Dorsolateral prefrontal cortex (tissue), 120 donors: ENCODE measurements at regions of chr12 and their contacts with region 1.

Region 1: GRCh38 chr12:50167041-50167828 is at the start of gene CERS5:
- DNase-seq: peak; percentile 89 to 98 (median 96)
- H3K4me3 ChIP-seq: peak within 1 kb of the TSS; percentile 74 to 99 (median 92)
- H3K27ac ChIP-seq: peak within 1 kb of the TSS in 58 of 59 donors; percentile 51 to 97 (median 88)
- H3K27me3 ChIP-seq: no peaks in the 10 kb centered on the region
- CTCF ChIP-seq: peak in 52 of 56 donors; percentile 10 to 77 (median 54)
- total RNA-seq, gene CERS5: 48.2 to 123 (median 77.2) TPM

Region 2: GRCh38 chr12:49945394-49946080 is 221.7 kb before region 1 on chr12:
- intact Hi-C with region 1: no loop called
- DNase-seq: peak in 9 of 10 donors; percentile 63 to 87 (median 78)
- H3K4me3 ChIP-seq: peak overlapping the region in 52 of 59 donors; percentile 5 to 61 (median 41)
- H3K27ac ChIP-seq: peak overlapping the region in 18 of 59 donors; percentile 1 to 66 (median 42)
- H3K27me3 ChIP-seq: no peaks in the 10 kb centered on the region
- CTCF ChIP-seq: peak; percentile 58 to 96 (median 86)

Region 3: GRCh38 chr12:50084775-50085614 is 82.2 kb before region 1 on chr12 and contains the start of gene SMARCD1:
- intact Hi-C with region 1: loop called (anchors 1 to 5 kb)
- DNase-seq: peak; percentile 90 to 96 (median 94)
- H3K4me3 ChIP-seq: peak within 1 kb of the TSS; percentile 66 to 96 (median 86)
- H3K27ac ChIP-seq: peak within 1 kb of the TSS; percentile 79 to 98 (median 95)
- H3K27me3 ChIP-seq: no peaks in the 10 kb centered on the region
- CTCF ChIP-seq: peak; percentile 36 to 87 (median 72)
- total RNA-seq, gene SMARCD1: 30.8 to 66.7 (median 44.2) TPM

Region 4: DNA sequence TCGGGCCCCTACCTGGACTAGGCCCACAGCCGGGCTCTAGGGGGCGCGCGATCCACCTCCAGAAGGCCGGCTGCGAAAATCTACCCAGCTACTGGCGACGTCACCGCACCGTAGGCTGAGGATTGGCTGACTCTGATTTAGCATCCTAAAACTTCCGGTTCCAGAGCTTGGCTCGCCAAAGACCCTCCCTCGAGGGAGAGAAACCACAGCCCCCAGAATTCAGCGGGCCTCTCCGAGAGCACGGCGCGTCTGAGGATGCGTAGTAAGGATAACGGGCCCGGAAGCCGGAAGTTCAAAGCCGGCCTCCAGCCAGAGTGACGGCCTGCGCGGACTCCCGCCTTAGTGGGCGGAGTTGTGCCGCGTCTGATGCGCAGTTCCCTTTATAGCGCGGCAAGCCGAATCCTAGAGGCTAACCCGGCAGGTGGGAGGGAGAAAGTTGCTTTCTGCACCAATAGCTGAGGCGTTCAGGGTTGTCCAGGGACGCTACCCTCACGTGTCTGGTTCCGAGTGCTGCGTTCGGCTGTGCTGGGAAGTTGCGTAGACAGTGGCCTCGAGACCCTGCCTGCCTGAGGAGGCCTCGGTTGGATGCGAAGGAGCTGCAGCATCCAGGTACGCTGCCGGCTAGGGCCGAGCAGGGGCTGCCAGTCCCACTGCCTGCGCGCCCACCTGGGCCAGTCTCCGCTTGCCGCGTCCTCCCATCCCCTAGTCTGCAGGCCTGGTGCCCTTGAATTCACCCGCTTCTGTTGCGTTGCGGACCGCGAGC is 55.4 kb before region 1 on chr12 and contains the start of gene COX14:
- intact Hi-C with region 1: loop called (anchors 2 kb)
- DNase-seq: peak; percentile 98 to 100 (median 99)
- H3K4me3 ChIP-seq: peak within 1 kb of the TSS; percentile 72 to 100 (median 96)
- H3K27ac ChIP-seq: peak within 1 kb of the TSS; percentile 65 to 97 (median 92)
- H3K27me3 ChIP-seq: no peaks in the 10 kb centered on the region
- CTCF ChIP-seq: peak in 55 of 56 donors; percentile 66 to 100 (median 91)
- total RNA-seq, gene COX14: 34.1 to 74.3 (median 53.9) TPM

Region 5: DNA sequence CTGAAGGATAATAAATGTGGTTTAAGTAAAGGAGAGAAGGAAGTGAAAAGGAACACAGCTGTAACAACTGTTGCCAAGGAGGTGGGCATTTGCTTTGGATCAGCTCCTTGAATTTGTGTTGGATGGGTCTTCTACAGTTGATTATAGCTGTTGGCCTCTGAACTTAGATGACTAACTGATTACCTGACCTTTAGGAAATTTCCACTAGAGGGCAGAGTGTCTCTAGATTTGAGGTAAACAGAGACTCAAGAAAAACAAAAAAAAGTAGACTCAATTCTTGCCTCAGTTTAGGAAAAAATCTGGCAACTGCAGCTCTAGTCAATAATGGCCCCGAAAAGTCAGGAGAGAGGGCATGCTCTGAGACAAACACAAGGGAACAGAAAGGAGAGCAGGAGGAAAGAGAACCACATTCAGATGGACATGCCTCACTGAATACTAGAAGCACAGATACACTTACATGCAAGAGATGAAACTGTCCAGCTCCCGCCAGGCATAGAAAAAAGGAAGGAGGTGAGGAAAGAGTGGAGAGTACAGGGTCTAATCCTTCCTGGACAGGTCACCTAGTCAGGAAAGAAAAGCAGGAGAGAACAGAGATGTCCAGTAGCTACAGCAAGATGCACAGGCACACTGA is 34.6 kb before region 1 on chr12:
- intact Hi-C with region 1: loop called in 1 of 2 experiments (anchors 5 kb)
- DNase-seq: no peak
- H3K4me3 ChIP-seq: no peak overlapping the region
- H3K27ac ChIP-seq: peak overlapping the region in 43 of 59 donors; percentile 3 to 76 (median 43)
- H3K27me3 ChIP-seq: no peaks in the 10 kb centered on the region
- CTCF ChIP-seq: peak in 53 of 56 donors; percentile 32 to 80 (median 63)

Region 6: DNA sequence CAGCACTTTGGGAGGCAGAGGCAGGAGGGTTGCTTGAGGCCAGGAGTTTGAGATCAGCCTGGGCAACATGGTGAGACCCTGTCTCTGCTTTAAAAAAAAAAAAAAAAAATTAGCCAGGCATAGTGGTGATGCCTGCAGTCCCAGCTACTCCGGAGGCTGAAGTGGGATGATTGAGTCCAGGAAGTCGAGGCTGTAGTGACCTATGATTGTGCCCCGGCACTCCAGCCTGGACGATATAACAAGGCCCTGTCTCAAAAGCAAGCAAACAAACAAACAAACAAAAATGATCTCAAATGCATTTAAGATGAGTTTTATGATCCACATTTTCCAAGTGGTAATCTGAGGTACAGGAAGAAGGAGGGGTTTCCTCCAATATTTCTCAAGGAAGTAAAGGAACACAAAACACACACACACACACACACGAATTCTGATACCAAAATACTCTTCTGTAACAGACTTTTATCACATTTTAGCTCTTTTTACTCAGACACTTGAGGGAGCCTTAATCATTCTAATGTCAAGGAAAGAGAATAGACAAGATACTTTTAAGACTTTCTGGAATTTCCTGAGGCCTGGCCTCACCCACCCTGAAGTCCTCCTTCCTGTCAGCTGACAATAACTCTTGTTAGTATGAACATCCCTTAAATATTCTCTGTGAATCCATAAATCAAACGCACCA is 44.3 kb after region 1 on chr12:
- intact Hi-C with region 1: no loop called
- DNase-seq: no peak
- H3K4me3 ChIP-seq: no peak overlapping the region
- H3K27ac ChIP-seq: peak overlapping the region in 5 of 59 donors; percentile 0 to 45 (median 12)
- H3K27me3 ChIP-seq: no peaks in the 10 kb centered on the region
- CTCF ChIP-seq: peak in 1 of 56 donors; percentile 9

Region 7: DNA sequence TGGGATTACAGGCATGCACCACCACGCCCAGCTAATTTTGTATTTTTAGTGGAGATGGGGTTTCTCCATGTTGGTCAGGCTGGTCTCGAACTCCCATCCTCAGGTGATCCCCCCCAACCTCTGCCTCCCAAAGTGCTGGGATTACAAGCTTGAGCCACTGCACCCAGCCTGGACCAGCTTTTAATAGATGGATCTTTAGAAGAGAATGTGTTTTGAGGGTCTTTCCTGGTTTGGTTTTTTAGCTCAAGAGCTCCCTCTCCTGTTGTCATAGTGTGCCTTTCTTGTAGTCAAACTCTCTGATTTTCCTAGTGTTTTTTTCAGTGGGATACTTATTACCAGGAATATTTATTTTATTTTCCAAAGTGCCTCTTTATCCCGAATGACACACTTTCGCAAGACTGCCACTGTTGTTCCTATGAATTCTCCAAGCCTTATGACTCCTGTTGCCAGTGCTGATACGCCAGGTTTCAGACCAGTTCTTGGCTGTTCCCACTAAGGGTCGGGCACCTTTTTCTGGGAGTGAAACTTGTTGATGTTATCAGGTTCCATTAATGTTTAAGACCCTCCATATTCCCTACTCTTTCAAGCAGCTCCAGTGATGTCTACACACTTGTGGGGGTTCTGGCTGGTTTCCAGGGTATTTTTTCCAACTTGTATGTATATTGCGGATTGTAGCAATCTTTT is 147.5 kb after region 1 on chr12:
- intact Hi-C with region 1: no loop called
- DNase-seq: peak in 1 of 10 donors; percentile 21
- H3K4me3 ChIP-seq: no peak overlapping the region
- H3K27ac ChIP-seq: no peak overlapping the region
- H3K27me3 ChIP-seq: no peaks in the 10 kb centered on the region
- CTCF ChIP-seq: peak in 54 of 56 donors; percentile 19 to 69 (median 48)